Spleen (tissue), 13 donors: ENCODE measurements at regions of chr14 and their contacts with region 1.

Region 1: DNA sequence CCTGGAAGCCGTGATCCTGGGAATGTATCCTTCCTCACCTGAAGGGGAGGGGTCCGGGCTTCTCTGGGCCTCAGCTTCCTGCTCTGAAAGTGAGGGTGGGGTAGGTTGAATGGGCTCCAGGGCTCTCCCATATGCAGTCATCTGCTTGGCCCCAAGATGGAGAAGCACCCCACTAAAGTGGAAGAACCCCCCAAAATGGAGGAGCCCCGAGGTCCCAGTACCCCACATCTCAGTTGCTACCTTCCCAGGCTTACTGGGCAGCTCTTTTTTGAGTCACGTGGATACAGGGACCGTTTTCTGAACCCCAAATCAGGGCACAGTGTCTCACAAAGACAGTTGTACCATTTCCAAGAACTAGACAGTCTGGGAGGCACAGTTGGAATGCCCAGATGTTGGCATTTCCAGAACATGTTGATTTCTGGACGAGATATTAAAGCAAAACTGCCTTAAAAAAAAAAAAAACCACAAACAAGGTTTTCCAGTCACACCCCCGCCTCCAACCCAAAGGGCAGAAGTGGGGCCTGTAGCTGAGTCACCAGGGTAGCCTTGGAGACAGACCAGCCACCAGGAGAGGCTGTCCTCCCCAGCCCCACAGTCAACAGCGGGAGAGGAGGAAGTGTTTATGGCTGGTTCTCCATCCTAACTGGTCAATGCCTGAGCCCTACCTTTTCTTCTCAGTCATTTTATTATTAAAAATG is 12.1 kb downstream of the VASH1 start:
- DNase-seq: peak; percentile 77
- H3K4me3 ChIP-seq: peak overlapping the region in 1 of 8 donors; percentile 9
- H3K27ac ChIP-seq: peak overlapping the region; percentile 19 to 85 (median 75)
- H3K4me1 ChIP-seq: peaks cover 15 to 99% (median 66%) of the 10 kb centered on the region in 6 donors
- H3K27me3 ChIP-seq: peaks cover 0 to 8% (median 0%) of the 10 kb centered on the region in 7 donors
- CTCF ChIP-seq: no peak
- POLR2A ChIP-seq: no peak

Region 2: GRCh38 chr14:76497537-76498462 is 275.5 kb before region 1 on chr14:
- intact Hi-C with region 1: no loop called
- DNase-seq: peak; percentile 43
- H3K4me3 ChIP-seq: no peak overlapping the region
- H3K27ac ChIP-seq: no peak overlapping the region
- H3K4me1 ChIP-seq: peaks cover 0 to 3% (median 0%) of the 10 kb centered on the region in 6 donors
- H3K27me3 ChIP-seq: peaks cover 0 to 40% (median 0%) of the 10 kb centered on the region in 7 donors
- CTCF ChIP-seq: no peak
- POLR2A ChIP-seq: no peak

Region 3: GRCh38 chr14:76514613-76515012 is 258.7 kb before region 1 on chr14:
- intact Hi-C with region 1: no loop called
- DNase-seq: peak; percentile 25
- H3K4me3 ChIP-seq: no peak overlapping the region
- H3K27ac ChIP-seq: no peak overlapping the region
- H3K4me1 ChIP-seq: peaks cover 0 to 19% (median 0%) of the 10 kb centered on the region in 6 donors
- H3K27me3 ChIP-seq: peaks cover 0 to 29% (median 0%) of the 10 kb centered on the region in 7 donors
- CTCF ChIP-seq: peak in 4 of 11 experiments; percentile 16 to 33 (median 24)
- POLR2A ChIP-seq: no peak

Region 4: DNA sequence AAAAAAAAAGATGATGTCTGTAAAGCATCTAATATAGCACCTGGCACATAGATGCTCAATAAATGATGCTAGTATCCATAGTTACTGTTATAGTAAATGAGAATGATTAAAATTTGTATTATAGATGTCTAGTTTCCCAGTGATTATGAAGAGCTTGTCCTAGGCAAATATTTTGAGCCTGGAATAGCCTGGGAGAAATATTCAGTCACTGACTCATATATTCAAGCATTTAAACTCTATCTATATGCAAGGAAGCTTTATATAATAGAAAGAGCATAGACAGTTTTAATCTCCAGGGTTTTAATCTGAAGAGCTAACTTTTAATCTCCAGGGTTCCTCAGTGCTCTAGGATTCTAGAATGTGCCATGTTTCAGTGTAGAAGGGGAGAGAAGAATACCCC is 103.6 kb before region 1 on chr14:
- intact Hi-C with region 1: no loop called
- DNase-seq: no peak
- H3K4me3 ChIP-seq: no peak overlapping the region
- H3K27ac ChIP-seq: no peak overlapping the region
- H3K4me1 ChIP-seq: no peaks in the 10 kb centered on the region
- H3K27me3 ChIP-seq: peaks cover 0 to 6% (median 0%) of the 10 kb centered on the region in 7 donors
- CTCF ChIP-seq: no peak
- POLR2A ChIP-seq: no peak

Region 5: DNA sequence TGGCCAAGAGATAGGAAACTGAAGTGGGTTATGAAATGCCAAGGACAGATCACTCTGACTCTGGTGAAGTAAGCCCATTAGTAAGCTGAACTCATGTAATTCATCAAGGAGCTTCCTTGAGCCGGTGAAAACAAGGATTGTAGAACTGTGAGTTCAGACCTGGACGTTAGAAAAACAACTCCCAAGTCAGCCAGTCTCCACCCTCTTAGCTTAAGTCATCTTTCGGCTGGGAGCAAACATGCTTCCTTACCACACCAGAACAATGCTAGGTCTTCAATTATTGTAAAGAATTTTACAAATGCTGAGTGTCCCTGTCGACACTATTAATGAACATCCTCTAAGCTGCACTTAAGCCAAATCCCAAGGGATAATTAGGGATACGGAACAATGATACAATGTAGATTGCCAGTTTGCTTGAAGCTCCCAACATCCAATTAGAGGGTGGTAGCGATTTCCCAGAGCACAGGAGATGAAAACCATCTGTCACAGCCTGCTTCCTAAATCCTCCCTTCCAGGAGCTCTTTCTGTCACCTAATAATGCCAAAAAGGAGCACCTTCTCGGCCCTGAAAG is 57.7 kb before region 1 on chr14:
- intact Hi-C with region 1: loop called (anchors 5 kb)
- DNase-seq: no peak
- H3K4me3 ChIP-seq: no peak overlapping the region
- H3K27ac ChIP-seq: peak overlapping the region in 7 of 8 donors; percentile 64 to 81 (median 71)
- H3K4me1 ChIP-seq: peaks cover 17 to 53% (median 30%) of the 10 kb centered on the region in 6 donors
- H3K27me3 ChIP-seq: peaks cover 0 to 6% (median 0%) of the 10 kb centered on the region in 7 donors
- CTCF ChIP-seq: no peak
- POLR2A ChIP-seq: no peak